ENCODE measurements at regions of chrX and their contacts with region 1.

Region 1: GRCh38 chrX:130079824-130080406 is 30.4 kb downstream of the ELF4 start:
- DNase-seq: peak; percentile 46 to 82 (median 54)
- ATAC-seq: peak; percentile 48
- H3K4me3 ChIP-seq: no peak overlapping the region
- H3K27ac ChIP-seq: no peak overlapping the region
- H3K4me1 ChIP-seq: peaks cover 41 to 42% of the 10 kb centered on the region in 2 experiments
- H3K27me3 ChIP-seq: no peaks in the 10 kb centered on the region
- CTCF ChIP-seq: peak; percentile 73 to 81 (median 76)
- EP300 ChIP-seq: no peak
- POLR2A ChIP-seq: no peak
- RAD21 ChIP-seq: peak; percentile 71 to 85

Region 2: DNA sequence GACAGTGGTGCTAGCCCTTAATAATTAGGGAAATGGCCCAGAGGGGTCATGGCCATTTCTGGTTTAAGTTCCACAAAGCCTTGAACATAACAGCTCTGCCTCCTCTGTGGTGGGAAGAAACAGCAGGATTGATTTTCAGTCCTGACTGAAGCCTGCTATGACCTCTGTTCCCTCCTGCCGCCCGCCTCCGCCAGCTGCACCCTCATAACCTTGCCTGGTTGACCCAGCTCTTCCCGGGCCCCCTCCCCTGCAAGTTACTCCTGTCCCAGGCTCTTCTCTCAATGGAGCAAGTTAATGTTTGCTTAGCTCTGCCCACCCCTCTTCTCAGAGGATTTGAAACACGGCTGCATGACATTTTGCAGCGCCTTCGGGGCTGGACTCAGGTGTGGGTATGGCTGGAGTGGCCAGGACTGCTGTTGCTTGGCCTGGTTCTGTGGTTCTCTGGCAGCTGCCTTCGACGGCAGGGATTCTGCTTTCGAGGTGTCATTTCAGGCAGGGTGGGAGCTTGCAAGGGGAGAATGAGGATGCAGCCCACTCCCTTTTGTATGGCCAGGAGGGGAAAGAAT is 70.2 kb before region 1 on chrX:
- CTCF ChIA-PET with region 1: no interaction called
- POLR2A ChIA-PET with region 1: no interaction called
- in situ Hi-C with region 1: no loop called
- intact Hi-C with region 1: no loop called
- DNase-seq: no peak
- ATAC-seq: no peak
- H3K4me3 ChIP-seq: no peak overlapping the region
- H3K27ac ChIP-seq: no peak overlapping the region
- H3K4me1 ChIP-seq: no peaks in the 10 kb centered on the region
- H3K27me3 ChIP-seq: no peaks in the 10 kb centered on the region
- CTCF ChIP-seq: no peak
- EP300 ChIP-seq: no peak
- POLR2A ChIP-seq: no peak
- RAD21 ChIP-seq: no peak

Region 3: GRCh38 chrX:130024127-130024526 is 55.8 kb before region 1 on chrX:
- CTCF ChIA-PET with region 1: no interaction called
- POLR2A ChIA-PET with region 1: no interaction called
- in situ Hi-C with region 1: no loop called
- intact Hi-C with region 1: no loop called
- DNase-seq: peak; percentile 91 to 94 (median 92)
- ATAC-seq: peak; percentile 100
- H3K4me3 ChIP-seq: no peak overlapping the region
- H3K27ac ChIP-seq: peak overlapping the region; percentile 51; the same call in 2 of the 3 replicates
- H3K4me1 ChIP-seq: peaks cover 7 to 10% of the 10 kb centered on the region in 2 experiments; a peak in 4 of 5 replicates
- H3K27me3 ChIP-seq: no peaks in the 10 kb centered on the region
- CTCF ChIP-seq: no peak
- EP300 ChIP-seq: no peak
- POLR2A ChIP-seq: no peak
- RAD21 ChIP-seq: no peak

Region 4: GRCh38 chrX:130120746-130121504 is 41.0 kb after region 1 on chrX:
- CTCF ChIA-PET with region 1: interaction called, 3 read pairs
- POLR2A ChIA-PET with region 1: interaction called, 12 read pairs
- in situ Hi-C with region 1: no loop called
- intact Hi-C with region 1: loop called (anchors 2 kb)
- DNase-seq: peak; percentile 74 to 83 (median 78)
- ATAC-seq: peak; percentile 91
- H3K4me3 ChIP-seq: peak overlapping the region; percentile 34
- H3K27ac ChIP-seq: peak overlapping the region; percentile 86
- H3K4me1 ChIP-seq: peaks cover 39 to 53% of the 10 kb centered on the region in 2 experiments; a peak in 4 of 5 replicates
- H3K27me3 ChIP-seq: no peaks in the 10 kb centered on the region
- CTCF ChIP-seq: peak; percentile 58 to 81 (median 77)
- EP300 ChIP-seq: no peak
- POLR2A ChIP-seq: peak; percentile 74
- RAD21 ChIP-seq: peak; percentile 55 to 64

Region 5: DNA sequence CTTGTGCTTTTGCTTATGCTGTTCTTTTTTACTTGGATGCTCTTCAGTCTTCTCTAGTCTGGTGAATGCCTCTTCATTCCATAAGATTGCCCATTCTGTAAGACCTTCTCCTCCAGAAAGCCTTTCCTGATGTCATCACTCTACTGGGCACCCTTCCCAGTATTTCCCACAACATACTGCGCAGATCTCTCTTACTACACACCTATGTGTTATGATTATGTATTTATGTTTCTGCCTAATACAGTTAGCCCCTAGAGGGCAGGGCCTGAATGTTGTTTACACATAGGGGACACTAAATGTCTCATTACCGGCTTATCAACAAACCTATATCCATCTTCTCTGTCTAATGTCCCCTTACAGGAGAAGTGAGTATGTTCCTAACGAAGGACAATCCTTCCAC is 64.6 kb after region 1 on chrX:
- CTCF ChIA-PET with region 1: no interaction called
- POLR2A ChIA-PET with region 1: interaction called, 3 read pairs
- in situ Hi-C with region 1: loop called (anchors 5 kb)
- intact Hi-C with region 1: no loop called
- DNase-seq: no peak
- ATAC-seq: peak; percentile 66; the same call in 2 of the 3 replicates
- H3K4me3 ChIP-seq: no peak overlapping the region
- H3K27ac ChIP-seq: no peak overlapping the region
- H3K4me1 ChIP-seq: peaks cover 0 to 7% of the 10 kb centered on the region in 2 experiments; a peak in 3 of 5 replicates
- H3K27me3 ChIP-seq: no peaks in the 10 kb centered on the region
- CTCF ChIP-seq: peak in 2 of 3 experiments; percentile 10 to 40; a peak in 2 of 6 replicates
- EP300 ChIP-seq: no peak
- POLR2A ChIP-seq: no peak
- RAD21 ChIP-seq: peak in 1 of 2 experiments; percentile 52; a peak in 3 of 4 replicates

Region 6: GRCh38 chrX:130165703-130166502 is 86.0 kb after region 1 on chrX and contains the start of gene AIFM1:
- CTCF ChIA-PET with region 1: no interaction called
- POLR2A ChIA-PET with region 1: interaction called, 3 read pairs
- in situ Hi-C with region 1: no loop called
- intact Hi-C with region 1: loop called (anchors 5 kb)
- DNase-seq: peak; percentile 91 to 96 (median 93)
- ATAC-seq: peak; percentile 92
- H3K4me3 ChIP-seq: peak within 1 kb of the TSS; percentile 68
- H3K27ac ChIP-seq: peak within 1 kb of the TSS; percentile 98
- H3K4me1 ChIP-seq: peaks cover 8 to 23% of the 10 kb centered on the region in 2 experiments; a peak in 3 of 5 replicates
- H3K27me3 ChIP-seq: no peaks in the 10 kb centered on the region
- CTCF ChIP-seq: no peak
- EP300 ChIP-seq: 0 out of 2 replicates have a peak, but pooled peaks have one; percentile 39
- POLR2A ChIP-seq: peak; percentile 93
- RAD21 ChIP-seq: peak; percentile 13 to 16; a peak in 1 of 4 replicates
- polyA plus RNA-seq, gene AIFM1: 51.0 to 62.0 TPM

Region 7: GRCh38 chrX:130196466-130196865 is 116.6 kb after region 1 on chrX:
- CTCF ChIA-PET with region 1: interaction called, 12 read pairs
- POLR2A ChIA-PET with region 1: interaction called, 3 read pairs
- in situ Hi-C with region 1: no loop called
- intact Hi-C with region 1: loop called (anchors 1 kb)
- DNase-seq: no peak
- ATAC-seq: no peak
- H3K4me3 ChIP-seq: no peak overlapping the region
- H3K27ac ChIP-seq: no peak overlapping the region
- H3K4me1 ChIP-seq: peaks cover 0 to 8% of the 10 kb centered on the region in 2 experiments; a peak in 2 of 5 replicates
- H3K27me3 ChIP-seq: no peaks in the 10 kb centered on the region
- CTCF ChIP-seq: no peak
- EP300 ChIP-seq: no peak
- POLR2A ChIP-seq: no peak
- RAD21 ChIP-seq: no peak

Region 8: DNA sequence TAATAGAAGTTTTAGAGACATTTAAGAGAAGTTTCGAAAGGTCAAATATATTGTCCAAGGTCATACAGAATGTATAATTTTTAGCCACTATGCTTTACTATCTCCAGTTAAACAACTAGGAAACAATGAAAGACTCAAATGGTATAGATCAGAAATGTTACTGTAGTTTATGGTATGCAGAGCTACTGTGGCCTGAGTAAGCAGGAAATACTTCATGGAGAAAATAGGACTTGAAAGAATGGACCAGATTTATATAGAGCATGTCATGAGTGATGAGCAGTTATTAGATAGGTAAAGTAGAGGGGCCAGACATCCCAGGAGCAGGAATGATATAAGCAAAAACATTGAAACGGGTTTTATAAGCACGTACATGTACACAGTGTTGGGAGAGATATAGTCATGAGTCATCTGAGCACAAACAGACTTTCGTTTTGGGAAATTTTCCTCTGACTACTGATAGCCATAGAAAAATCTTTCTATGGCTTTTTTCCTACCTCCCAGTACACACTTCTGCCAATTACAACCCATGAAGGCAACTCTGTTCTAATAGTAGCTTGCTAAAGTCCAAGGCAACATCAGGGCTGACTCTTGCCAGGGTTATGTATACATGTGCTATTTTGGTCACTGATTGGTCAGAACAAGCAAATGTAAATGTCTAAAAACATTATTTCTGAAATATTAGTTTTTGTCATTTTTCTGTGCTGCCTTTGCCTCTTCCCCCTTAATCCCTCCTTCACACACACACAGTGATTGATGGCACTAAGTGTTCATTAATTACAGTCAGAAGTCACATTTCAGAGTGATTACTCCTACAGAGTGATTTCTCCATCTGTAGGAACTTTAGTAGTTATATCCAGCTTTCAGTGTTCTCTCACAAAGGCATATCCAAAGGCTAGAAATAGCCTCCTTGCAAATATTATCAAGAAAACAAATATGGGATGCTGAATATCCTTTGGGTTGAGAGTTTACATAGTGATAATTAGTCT is 624.4 kb after region 1 on chrX:
- CTCF ChIA-PET with region 1: no interaction called
- POLR2A ChIA-PET with region 1: no interaction called
- in situ Hi-C with region 1: no loop called
- intact Hi-C with region 1: no loop called
- DNase-seq: peak in 2 of 4 experiments; percentile 12 to 30
- ATAC-seq: peak; percentile 77
- H3K4me3 ChIP-seq: no peak overlapping the region
- H3K27ac ChIP-seq: peak overlapping the region; percentile 66; the same call in 2 of the 3 replicates
- H3K4me1 ChIP-seq: peaks cover 2 to 26% of the 10 kb centered on the region in 2 experiments; a peak in 4 of 5 replicates
- H3K27me3 ChIP-seq: no peaks in the 10 kb centered on the region
- CTCF ChIP-seq: no peak
- EP300 ChIP-seq: no peak; the same call in 1 of the 2 replicates
- POLR2A ChIP-seq: no peak
- RAD21 ChIP-seq: no peak

Measured in K562 (cell line).